ENCODE measurements at regions of chr1 and their contacts with region 1.

Region 1: GRCh38 chr1:39081266-39082009 is 55.3 kb downstream of the NDUFS5 start:
- DNase-seq: no peak
- ATAC-seq: peak; percentile 59 to 65
- H3K4me3 ChIP-seq: peak overlapping the region; percentile 52
- H3K27ac ChIP-seq: peak overlapping the region; percentile 1 to 81; a peak in 4 of 6 replicates
- H3K4me1 ChIP-seq: 0 out of 3 replicates have a peak, but pooled peaks cover 3% of the 10 kb centered on the region
- CTCF ChIP-seq: no peak
- EP300 ChIP-seq: no peak
- POLR2A ChIP-seq: no peak
- RAD21 ChIP-seq: no peak

Region 2: DNA sequence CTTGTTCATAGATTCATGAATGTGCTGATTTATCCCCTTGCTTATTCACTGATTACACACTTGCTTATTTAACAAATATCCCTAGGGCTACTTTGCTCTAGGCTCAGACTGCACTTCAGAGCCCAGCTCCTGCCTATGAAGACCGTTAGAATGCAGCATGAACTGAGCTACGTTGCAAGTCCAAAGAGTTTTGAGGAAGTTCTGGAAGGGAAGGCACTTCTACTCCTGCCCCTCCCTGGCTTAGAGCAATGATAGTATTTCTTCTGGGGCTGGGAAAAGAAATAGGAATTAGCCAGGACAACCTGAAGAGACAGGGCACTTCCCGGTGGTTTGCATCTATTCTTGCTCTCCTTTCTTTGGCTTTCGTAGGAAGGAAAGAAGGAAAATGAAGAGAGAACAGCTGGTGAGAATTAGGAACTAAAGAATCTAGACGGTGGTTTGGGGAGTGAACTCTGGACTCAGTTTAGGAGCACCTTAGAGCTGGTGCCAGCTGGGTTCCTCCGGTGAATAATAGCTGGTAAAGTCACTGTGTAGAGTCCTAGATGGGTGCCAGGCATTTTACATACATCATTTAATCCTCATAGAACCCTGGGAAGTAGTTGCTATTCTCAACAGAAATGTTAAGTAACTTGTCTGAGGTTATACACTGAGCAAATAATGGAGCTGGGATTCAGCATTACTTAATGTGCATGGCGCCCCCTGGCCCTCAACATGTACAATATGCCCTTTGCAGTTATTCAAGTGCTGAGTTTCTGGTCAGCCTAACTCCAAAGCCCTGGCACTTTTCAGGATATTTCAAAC is 10.6 kb after region 1 on chr1:
- CTCF ChIA-PET with region 1: interaction called, 25 read pairs
- POLR2A ChIA-PET with region 1: no interaction called
- DNase-seq: peak in 1 of 2 experiments; percentile 79
- ATAC-seq: peak; percentile 88 to 93
- H3K4me3 ChIP-seq: no peak overlapping the region
- H3K27ac ChIP-seq: no peak overlapping the region
- H3K4me1 ChIP-seq: peaks cover 5% of the 10 kb centered on the region; the same call in 1 of the 3 replicates
- CTCF ChIP-seq: peak; percentile 68
- EP300 ChIP-seq: no peak
- POLR2A ChIP-seq: no peak
- RAD21 ChIP-seq: peak; percentile 67 to 76

Region 3: GRCh38 chr1:39886757-39887231 is 805.4 kb after region 1 on chr1:
- CTCF ChIA-PET with region 1: no interaction called
- POLR2A ChIA-PET with region 1: no interaction called
- DNase-seq: no peak
- ATAC-seq: no peak
- H3K4me3 ChIP-seq: no peak overlapping the region
- H3K27ac ChIP-seq: no peak overlapping the region
- H3K4me1 ChIP-seq: peaks cover 5% of the 10 kb centered on the region; the same call in 2 of the 3 replicates
- CTCF ChIP-seq: no peak
- EP300 ChIP-seq: no peak
- POLR2A ChIP-seq: no peak
- RAD21 ChIP-seq: no peak

Measured in A549 (cell line).